ENCODE measurements at regions of chr11 and their contacts with region 1.

Region 1: GRCh38 chr11:48111891-48112290 is 104.7 kb upstream of the OR4B1 start:
- DNase-seq: no peak
- CTCF ChIP-seq: no peak

Region 2: GRCh38 chr11:47938791-47939560 is 172.9 kb before region 1 on chr11:
- in situ Hi-C with region 1: loop called (anchors 5 kb)
- DNase-seq: no peak
- CTCF ChIP-seq: no peak

Measured in GM13976 (cell line).